ENCODE measurements at regions of chr2 and their contacts with region 1.

Region 1: DNA sequence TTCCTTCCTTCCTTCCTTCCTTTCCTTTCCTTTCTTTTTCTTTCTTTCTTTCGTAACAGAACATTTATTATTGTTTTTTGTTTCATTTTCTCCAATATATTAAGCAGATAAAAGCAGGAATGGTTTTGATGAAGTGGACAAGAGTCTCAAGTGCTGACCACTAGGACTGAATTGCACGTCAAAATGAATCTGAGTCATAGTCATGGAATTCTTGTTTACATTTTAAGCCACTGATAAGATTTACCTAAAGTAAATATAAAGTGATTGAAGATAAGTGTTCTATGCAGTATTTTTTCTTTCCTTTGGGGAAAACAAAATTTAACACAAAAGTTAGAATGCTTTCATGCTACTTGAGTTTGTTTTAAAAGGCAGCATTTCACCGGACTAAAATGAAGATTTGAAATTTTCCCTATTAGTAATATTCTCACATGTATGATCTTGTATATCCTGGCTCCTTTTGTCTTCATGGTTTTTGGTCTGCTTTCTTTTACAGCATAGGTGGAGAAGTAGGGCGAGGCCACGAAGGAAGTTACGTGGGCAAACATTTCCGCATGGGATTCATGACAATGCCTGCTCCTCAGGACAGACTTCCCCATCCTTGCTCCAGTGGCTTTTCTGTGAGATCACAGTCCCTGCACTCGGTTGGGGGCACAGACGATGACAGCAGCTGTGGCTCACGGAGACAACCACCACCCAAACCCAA is 113.5 kb downstream of the NYAP2 start:
- DNase-seq: peak; percentile 39 to 47
- H3K4me3 ChIP-seq: no peak overlapping the region
- H3K27ac ChIP-seq: no peak overlapping the region
- H3K4me1 ChIP-seq: peaks cover 10% of the 10 kb centered on the region; the same call in 1 of the 2 replicates
- H3K27me3 ChIP-seq: no peaks in the 10 kb centered on the region
- CTCF ChIP-seq: no peak

Region 2: DNA sequence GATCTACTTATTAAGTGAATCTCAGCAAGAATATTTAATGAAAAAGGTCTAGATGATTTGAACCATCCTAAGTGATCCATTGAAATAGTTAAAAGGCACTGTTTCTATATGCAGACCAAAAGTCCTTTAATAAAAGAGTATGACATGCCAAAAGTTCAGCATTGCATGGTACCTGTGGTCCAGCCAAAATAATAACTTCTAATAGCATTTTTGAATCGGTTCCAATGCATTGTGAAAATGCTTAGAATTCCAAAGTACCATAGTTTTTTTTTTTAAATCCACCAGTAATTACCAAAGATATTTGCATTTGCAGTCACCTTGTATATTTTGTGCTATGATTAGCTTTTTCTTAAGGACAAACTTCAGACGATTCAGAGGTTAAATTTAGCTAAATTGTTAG is 33.6 kb before region 1 on chr2:
- CTCF ChIA-PET with region 1: no interaction called
- POLR2A ChIA-PET with region 1: no interaction called
- intact Hi-C with region 1: loop called (anchors 2 kb)
- DNase-seq: no peak
- H3K4me3 ChIP-seq: no peak overlapping the region
- H3K27ac ChIP-seq: no peak overlapping the region
- H3K4me1 ChIP-seq: no peaks in the 10 kb centered on the region
- H3K27me3 ChIP-seq: no peaks in the 10 kb centered on the region
- CTCF ChIP-seq: no peak